Naive thymus-derived CD4-positive, alpha-beta T cell (primary cell): ENCODE measurements at regions of chr7 and their contacts with region 1.

Region 1: DNA sequence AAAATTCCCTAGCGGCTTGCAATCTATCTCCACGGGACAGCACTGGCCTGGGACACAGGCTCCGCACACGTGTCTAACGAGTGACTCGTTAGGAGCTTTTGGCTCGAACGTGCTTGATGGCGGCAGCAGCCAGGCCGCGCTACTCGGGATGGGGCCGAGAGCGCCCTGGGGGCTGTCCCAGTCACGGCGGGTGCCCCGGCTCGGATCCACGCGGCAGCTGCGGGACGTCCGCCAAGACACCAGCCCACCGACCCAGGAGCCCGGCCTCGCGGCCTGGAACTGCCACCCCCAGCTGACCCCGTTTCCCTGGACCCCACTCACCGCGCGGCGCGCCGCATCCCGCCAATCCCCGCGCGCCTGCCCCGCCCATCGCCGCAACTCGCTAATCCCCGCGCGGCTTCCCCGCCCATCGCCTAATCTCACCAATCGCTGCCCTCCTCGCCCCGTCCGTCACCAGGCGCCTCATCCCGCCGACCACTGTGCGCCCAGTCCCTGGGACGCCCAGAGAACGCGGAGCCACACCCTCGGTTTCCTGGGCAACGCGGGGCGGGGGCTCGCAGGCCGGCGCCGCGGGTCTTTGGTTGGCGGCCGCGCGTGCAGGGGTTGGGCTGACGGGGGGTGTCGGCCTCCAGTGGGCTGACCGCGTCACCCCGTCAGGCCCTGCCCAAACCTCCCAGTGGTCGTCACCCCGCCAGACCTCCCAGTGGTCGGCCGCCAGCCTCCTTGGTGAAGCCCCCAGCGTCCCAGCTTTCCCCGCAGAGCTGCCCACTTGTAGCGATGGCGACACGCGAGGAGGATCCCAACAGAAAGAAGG is at the start of gene POLD2:
- DNase-seq: peak; percentile 88 to 99 (median 94)
- ATAC-seq: peak; percentile 99
- H3K4me3 ChIP-seq: peak within 1 kb of the TSS; percentile 89
- H3K4me3 Mint-ChIP-seq: peak within 1 kb of the TSS; percentile 82 to 97 (median 93)
- H3K27ac ChIP-seq: peak within 1 kb of the TSS; percentile 74
- H3K27ac Mint-ChIP-seq: peak within 1 kb of the TSS; percentile 40 to 96 (median 87)
- H3K4me1 ChIP-seq: peaks cover 8 to 9% of the 10 kb centered on the region in 2 donors
- H3K4me1 Mint-ChIP-seq: peaks cover 18 to 40% (median 39%) of the 10 kb centered on the region in 7 donors
- H3K27me3 ChIP-seq: no peaks in the 10 kb centered on the region
- H3K27me3 Mint-ChIP-seq: peaks cover 0 to 23% (median 0%) of the 10 kb centered on the region in 5 donors
- total RNA-seq, gene POLD2: 55.1 to 118 (median 69.2) TPM

Region 2: DNA sequence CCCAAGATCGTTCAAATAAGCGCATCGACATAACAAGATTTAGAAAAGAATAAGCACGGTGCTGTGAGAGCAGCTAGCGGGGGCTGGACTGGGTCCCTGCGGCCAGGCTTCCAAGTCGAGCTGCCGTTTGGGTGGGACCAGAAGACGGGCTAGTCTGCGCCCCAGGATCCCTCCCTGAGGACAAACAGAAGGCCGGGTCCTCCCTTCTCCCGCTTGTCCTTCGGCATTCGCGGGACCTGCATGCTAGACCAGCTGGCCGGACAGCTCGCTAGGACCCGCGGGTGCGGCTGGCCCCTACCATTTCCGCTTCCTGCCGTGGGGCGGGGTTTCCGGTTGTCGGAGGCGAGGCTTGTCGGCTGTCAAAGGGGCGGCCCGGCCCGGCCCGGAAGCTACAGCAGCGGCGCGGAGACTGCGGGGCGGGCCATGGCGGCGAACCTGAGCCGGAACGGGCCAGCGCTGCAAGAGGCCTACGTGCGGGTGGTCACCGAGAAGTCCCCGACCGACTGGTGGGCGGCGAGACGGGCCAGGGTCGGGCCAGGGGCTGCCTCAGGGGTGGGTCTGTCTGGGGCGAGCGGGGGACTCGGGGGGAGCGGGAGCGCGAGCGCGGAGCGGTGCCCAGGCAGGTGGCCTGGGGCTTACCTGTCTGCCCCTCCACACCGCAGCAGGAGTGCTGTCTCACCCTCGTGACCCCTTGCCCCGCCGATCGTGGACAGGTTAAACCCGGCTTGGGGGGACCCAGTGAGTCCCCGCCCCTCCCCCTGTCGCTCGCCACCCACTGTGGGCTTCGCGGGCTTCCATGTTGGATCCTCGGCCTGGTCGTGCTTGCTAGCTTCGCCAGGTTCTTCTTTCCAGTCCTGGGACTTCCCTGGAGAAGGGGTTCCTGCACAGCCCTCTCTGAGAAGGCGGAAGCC is 78.8 kb before region 1 on chr7 and contains the start of gene DBNL:
- CTCF ChIA-PET with region 1: no interaction called
- POLR2A ChIA-PET with region 1: interaction called, 5 read pairs
- intact Hi-C with region 1: loop called (anchors 1 kb)
- DNase-seq: peak; percentile 79 to 96 (median 84)
- ATAC-seq: peak; percentile 68
- H3K4me3 ChIP-seq: peak within 1 kb of the TSS; percentile 87
- H3K4me3 Mint-ChIP-seq: peak within 1 kb of the TSS; percentile 84 to 97 (median 92)
- H3K27ac ChIP-seq: peak within 1 kb of the TSS; percentile 93
- H3K27ac Mint-ChIP-seq: peak within 1 kb of the TSS; percentile 86 to 99 (median 96)
- H3K4me1 ChIP-seq: peaks cover 23 to 41% of the 10 kb centered on the region in 2 donors
- H3K4me1 Mint-ChIP-seq: peaks cover 38 to 60% (median 55%) of the 10 kb centered on the region in 7 donors
- H3K27me3 ChIP-seq: no peaks in the 10 kb centered on the region
- H3K27me3 Mint-ChIP-seq: no peaks in the 10 kb centered on the region
- total RNA-seq, gene DBNL: 112 to 182 (median 164) TPM

Region 3: DNA sequence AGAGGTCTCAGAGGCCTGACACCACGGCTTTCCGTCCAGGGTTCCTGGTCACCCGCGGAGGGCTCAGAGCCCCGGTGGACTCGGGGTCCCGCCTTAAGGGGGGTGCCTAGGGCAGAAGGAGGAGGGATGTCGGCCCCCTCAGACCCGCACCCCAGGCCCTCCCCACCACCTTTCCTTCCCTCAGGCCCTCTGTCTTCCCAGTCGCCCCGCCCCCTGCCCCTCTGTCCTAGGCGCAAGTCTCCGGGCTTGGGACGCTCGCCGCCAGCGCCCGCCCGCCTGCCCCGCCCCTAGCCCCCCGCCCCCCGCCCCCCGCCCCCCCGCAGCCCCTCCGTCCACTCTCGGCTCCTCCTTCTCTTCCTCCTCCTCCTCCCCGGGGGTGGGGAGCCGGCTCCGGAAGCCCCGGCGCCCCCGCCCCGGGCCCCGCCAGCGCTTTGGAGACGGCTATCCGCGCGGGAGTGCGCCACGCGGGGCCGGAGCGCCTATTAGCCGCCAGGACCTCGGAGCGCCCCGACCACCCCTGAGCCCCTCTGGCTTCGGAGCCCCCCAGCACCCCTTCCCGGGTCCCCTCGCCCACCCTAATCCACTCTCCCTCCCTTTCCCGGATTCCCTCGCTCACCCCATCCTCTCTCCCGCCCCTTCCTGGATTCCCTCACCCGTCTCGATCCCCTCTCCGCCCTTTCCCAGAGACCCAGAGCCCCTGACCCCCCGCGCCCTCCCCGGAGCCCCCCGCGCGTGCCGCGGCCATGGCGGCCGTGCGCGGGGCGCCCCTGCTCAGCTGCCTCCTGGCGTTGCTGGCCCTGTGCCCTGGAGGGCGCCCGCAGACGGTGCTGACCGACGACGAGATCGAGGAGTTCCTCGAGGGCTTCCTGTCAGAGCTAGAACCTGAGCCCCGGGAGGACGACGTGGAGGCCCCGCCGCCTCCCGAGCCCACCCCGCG is 19.2 kb before region 1 on chr7 and contains the start of gene AEBP1:
- CTCF ChIA-PET with region 1: no interaction called
- POLR2A ChIA-PET with region 1: interaction called, 8 read pairs
- intact Hi-C with region 1: loop called (anchors 1 to 2 kb)
- DNase-seq: peak in 8 of 9 donors; percentile 16 to 51 (median 34)
- ATAC-seq: peak; percentile 62
- H3K4me3 ChIP-seq: peak within 1 kb of the TSS; percentile 53
- H3K4me3 Mint-ChIP-seq: peak within 1 kb of the TSS; percentile 69 to 91 (median 82)
- H3K27ac ChIP-seq: peak within 1 kb of the TSS; percentile 72
- H3K27ac Mint-ChIP-seq: peak within 1 kb of the TSS; percentile 55 to 93 (median 89)
- H3K4me1 ChIP-seq: no peaks in the 10 kb centered on the region
- H3K4me1 Mint-ChIP-seq: peaks cover 7 to 28% (median 16%) of the 10 kb centered on the region in 7 donors
- H3K27me3 ChIP-seq: no peaks in the 10 kb centered on the region
- H3K27me3 Mint-ChIP-seq: peaks cover 0 to 24% (median 0%) of the 10 kb centered on the region in 5 donors
- total RNA-seq, gene AEBP1: 7.7 to 33.1 (median 27.5) TPM

Region 4: GRCh38 chr7:44145969-44146911 is 22.8 kb after region 1 on chr7:
- CTCF ChIA-PET with region 1: no interaction called
- POLR2A ChIA-PET with region 1: no interaction called
- intact Hi-C with region 1: loop called (anchors 1 kb)
- DNase-seq: peak; percentile 21 to 81 (median 51)
- ATAC-seq: peak; percentile 80
- H3K4me3 ChIP-seq: peak overlapping the region; percentile 59
- H3K4me3 Mint-ChIP-seq: peak overlapping the region; percentile 68 to 89 (median 83)
- H3K27ac ChIP-seq: peak overlapping the region; percentile 52
- H3K27ac Mint-ChIP-seq: peak overlapping the region in 8 of 9 donors; percentile 46 to 91 (median 78)
- H3K4me1 ChIP-seq: no peaks in the 10 kb centered on the region
- H3K4me1 Mint-ChIP-seq: peaks cover 0 to 11% (median 7%) of the 10 kb centered on the region in 7 donors
- H3K27me3 ChIP-seq: no peaks in the 10 kb centered on the region
- H3K27me3 Mint-ChIP-seq: peaks cover 0 to 9% (median 0%) of the 10 kb centered on the region in 5 donors

Region 5: GRCh38 chr7:44573464-44574286 is 450.3 kb after region 1 on chr7 and contains the start of gene DDX56:
- CTCF ChIA-PET with region 1: no interaction called
- POLR2A ChIA-PET with region 1: no interaction called
- intact Hi-C with region 1: loop called in 1 of 2 experiments (anchors 5 kb)
- DNase-seq: peak; percentile 72 to 90 (median 87)
- ATAC-seq: peak; percentile 97
- H3K4me3 ChIP-seq: peak within 1 kb of the TSS; percentile 95
- H3K4me3 Mint-ChIP-seq: peak within 1 kb of the TSS; percentile 91 to 98 (median 95)
- H3K27ac ChIP-seq: peak within 1 kb of the TSS; percentile 95
- H3K27ac Mint-ChIP-seq: peak within 1 kb of the TSS; percentile 92 to 99 (median 98)
- H3K4me1 ChIP-seq: peaks cover 19 to 27% of the 10 kb centered on the region in 2 donors
- H3K4me1 Mint-ChIP-seq: peaks cover 20 to 48% (median 33%) of the 10 kb centered on the region in 7 donors
- H3K27me3 ChIP-seq: no peaks in the 10 kb centered on the region
- H3K27me3 Mint-ChIP-seq: no peaks in the 10 kb centered on the region
- total RNA-seq, gene DDX56: 82.8 to 124 (median 100.0) TPM